HEK293 (cell line): ENCODE measurements at regions of chr7 and their contacts with region 1.

Region 1: GRCh38 chr7:142323706-142324105 is 65.8 kb upstream of the PRSS58 start:
- H3K4me3 ChIP-seq: no peak overlapping the region
- H3K27ac ChIP-seq: no peak overlapping the region
- H3K4me1 ChIP-seq: no peaks in the 10 kb centered on the region
- CTCF ChIP-seq: peak; percentile 64; the same call in 1 of the 2 replicates

Region 2: DNA sequence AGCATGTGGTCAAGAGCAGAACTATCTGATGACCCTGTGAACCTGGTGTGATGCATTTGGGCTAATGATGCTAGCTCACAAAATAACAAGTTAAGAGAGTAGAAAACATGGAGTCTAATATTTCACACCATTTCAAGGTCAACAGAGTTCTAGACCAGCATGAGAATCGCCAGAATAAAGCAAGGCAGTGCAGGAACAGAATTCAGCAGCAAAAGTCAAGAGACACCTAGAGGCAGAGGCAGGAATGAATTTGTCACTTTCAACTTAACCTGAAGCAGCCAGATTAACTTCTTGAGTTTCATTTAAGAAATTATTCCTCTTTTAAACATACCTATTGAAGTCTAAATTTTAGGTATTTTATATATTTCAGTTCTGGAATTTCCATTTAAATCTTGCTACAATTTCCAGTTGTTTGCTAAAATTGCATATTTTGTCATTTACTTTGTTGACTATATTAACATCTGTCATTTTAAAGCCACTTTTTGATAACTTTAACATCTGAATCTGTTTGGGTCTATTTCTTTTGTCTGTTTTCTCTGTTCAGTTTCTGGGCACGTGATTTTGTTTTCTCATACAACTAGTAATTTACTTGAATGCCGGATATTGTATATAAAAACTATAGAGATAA is 21.7 kb before region 1 on chr7:
- CTCF ChIA-PET with region 1: interaction called, 30 read pairs
- POLR2A ChIA-PET with region 1: no interaction called
- H3K4me3 ChIP-seq: no peak overlapping the region
- H3K27ac ChIP-seq: no peak overlapping the region
- H3K4me1 ChIP-seq: no peaks in the 10 kb centered on the region
- CTCF ChIP-seq: no peak

Region 3: DNA sequence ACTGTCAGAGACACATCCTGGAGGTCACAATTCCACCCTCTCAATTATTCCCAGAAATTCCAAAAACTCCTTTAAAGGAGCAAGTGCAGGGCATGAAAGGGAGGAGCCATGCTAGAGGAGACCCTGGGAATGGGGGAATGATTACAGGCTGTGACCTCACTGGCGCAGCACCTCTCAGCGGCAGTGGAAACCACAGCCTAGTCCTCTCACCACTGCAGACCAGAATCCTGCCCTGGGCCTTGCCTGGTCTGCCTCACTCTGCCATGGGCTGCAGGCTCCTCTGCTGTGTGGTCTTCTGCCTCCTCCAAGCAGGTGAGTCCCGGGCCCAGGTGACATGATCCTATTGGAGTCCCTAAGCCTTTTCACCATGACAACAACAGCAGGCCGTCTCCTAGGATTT is 15.4 kb before region 1 on chr7:
- CTCF ChIA-PET with region 1: interaction called, 30 read pairs
- POLR2A ChIA-PET with region 1: no interaction called
- H3K4me3 ChIP-seq: no peak overlapping the region
- H3K27ac ChIP-seq: no peak overlapping the region
- H3K4me1 ChIP-seq: no peaks in the 10 kb centered on the region
- CTCF ChIP-seq: no peak

Region 4: DNA sequence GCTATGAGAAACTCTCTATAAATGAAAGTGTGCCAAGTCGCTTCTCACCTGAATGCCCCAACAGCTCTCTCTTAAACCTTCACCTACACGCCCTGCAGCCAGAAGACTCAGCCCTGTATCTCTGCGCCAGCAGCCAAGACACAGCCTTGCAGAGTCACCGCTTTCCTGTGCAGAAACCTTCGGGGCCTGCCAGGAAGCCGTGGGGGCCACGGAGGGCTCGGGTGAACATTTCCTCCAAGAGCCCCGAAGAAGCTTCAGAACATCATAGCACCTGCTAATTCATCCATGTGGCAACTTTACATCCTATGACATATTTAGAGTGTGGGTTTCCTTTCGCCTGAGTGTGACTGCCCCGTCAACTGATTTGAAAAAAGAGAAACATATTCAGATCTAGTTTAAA is 10.2 kb before region 1 on chr7:
- CTCF ChIA-PET with region 1: interaction called, 16 read pairs
- POLR2A ChIA-PET with region 1: no interaction called
- H3K4me3 ChIP-seq: no peak overlapping the region
- H3K27ac ChIP-seq: no peak overlapping the region
- H3K4me1 ChIP-seq: no peaks in the 10 kb centered on the region
- CTCF ChIP-seq: no peak

Region 5: DNA sequence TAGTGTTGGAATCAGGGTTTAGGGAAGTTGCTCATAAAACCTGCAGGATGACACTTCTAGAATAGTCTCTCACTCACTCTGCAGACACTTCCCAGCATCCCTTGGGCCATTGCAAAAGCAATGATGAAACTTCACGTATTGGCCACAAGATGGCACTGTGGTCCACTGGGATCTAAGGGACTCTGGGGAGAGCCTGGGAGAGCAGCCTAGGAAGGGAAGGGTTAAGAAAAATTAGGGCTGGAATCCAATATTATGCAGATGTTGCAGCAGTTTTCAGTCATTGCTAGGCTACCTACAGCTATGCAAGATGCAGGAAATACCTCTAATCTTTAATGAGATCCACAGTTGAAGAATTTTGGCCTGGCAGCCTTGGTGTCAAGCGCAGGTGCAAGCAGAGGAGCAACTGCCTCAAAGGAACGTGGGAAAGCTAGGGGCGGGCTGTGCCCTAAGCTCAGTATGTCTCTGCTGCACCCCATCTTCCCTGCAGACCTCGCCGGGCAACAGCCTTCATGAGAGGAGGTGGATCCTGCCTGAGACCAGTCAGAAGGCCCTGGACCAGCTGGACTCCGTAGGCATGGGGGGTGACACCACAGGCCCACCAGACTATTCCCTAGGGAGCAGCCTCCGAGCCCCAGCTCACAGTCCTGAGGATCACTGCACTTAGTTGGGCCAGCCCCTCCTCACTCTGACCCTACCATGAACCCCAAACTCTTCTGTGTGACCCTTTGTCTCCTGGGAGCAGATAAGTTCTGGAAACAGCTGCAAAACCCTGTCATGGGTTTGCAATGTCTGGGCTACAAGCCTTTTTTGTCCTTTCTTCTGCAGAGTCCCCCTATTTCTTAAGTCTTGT is 62.0 kb after region 1 on chr7:
- CTCF ChIA-PET with region 1: interaction called, 10 read pairs
- POLR2A ChIA-PET with region 1: no interaction called
- H3K4me3 ChIP-seq: no peak overlapping the region
- H3K27ac ChIP-seq: no peak overlapping the region
- H3K4me1 ChIP-seq: no peaks in the 10 kb centered on the region
- CTCF ChIP-seq: peak; percentile 48

Region 6: DNA sequence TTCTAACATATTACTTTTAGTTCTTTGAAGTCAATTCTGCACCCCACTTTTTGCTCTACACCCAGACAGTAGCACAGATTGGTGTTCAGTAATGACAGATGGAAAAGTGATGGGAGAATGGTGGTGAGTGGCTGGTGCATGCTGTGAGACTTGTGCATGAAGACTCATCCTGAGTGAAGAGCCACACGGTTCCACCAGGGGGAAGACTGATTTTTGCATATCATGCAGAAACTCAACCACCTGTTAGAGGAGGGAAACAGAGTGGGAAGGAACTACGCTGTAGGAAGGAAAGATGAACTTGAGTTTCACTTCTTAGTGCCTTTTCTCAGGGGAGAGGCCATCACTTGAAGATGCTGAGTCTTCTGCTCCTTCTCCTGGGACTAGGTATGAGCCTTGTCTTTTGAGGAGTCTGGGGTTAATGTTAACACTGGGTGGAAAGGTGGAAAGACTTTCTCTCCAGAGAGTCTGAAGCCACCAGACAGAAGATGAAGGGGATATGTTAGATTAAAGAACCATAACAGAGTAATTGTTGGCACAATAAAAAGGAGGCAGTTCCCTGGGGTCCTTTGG is 416.3 kb after region 1 on chr7:
- CTCF ChIA-PET with region 1: no interaction called
- POLR2A ChIA-PET with region 1: no interaction called
- H3K4me3 ChIP-seq: no peak overlapping the region
- H3K27ac ChIP-seq: no peak overlapping the region
- H3K4me1 ChIP-seq: no peaks in the 10 kb centered on the region
- CTCF ChIP-seq: peak; percentile 16; the same call in 1 of the 2 replicates

Region 7: GRCh38 chr7:143394790-143395602 is 1071.3 kb after region 1 on chr7:
- CTCF ChIA-PET with region 1: no interaction called
- POLR2A ChIA-PET with region 1: no interaction called
- H3K4me3 ChIP-seq: no peak overlapping the region
- H3K27ac ChIP-seq: no peak overlapping the region
- H3K4me1 ChIP-seq: no peaks in the 10 kb centered on the region
- CTCF ChIP-seq: no peak